ENCODE measurements at regions of chr15 and their contacts with region 1.

Region 1: DNA sequence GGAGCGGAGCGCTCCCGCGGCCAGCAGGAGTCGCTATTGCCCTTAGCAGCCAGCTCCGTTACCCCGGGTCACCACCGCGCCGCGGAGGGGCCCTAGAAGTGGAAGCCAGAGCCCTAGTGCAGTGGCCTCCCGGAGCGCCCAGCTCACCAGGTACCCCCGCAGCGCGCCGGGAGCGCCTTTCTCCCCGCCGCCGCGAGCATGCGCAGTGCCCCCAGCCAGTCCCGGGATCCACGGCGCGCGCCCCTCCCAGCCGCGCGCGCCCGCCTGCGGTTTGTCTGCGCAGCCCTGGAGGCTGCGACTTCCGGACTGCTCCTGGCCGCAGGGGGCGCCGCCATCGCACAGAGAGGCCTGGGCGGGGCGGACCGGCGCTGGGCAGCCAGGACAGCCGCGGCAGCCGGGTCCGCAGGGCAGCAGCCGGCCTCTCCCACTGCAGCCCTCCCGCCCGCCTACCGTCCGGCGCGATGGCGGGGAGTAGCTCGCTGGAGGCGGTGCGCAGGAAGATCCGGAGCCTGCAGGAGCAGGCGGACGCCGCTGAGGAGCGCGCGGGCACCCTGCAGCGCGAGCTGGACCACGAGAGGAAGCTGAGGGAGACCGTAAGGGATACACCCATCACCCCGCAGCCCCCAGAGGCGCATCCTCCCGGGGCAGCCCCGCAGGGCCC is 5.7 kb downstream of the TPM1 start:
- DNase-seq: peak; percentile 72 to 90 (median 85)
- ATAC-seq: peak; percentile 92
- H3K4me3 ChIP-seq: peak overlapping the region; percentile 76
- H3K4me3 Mint-ChIP-seq: peak overlapping the region; percentile 84 to 97 (median 94)
- H3K27ac ChIP-seq: peak overlapping the region; percentile 59
- H3K27ac Mint-ChIP-seq: peak overlapping the region; percentile 25 to 85 (median 68)
- H3K4me1 ChIP-seq: peaks cover 7 to 16% of the 10 kb centered on the region in 2 donors
- H3K4me1 Mint-ChIP-seq: peaks cover 13 to 42% (median 26%) of the 10 kb centered on the region in 7 donors
- H3K27me3 ChIP-seq: peaks cover 17 to 27% of the 10 kb centered on the region in 2 donors
- H3K27me3 Mint-ChIP-seq: peaks cover 30 to 60% (median 36%) of the 10 kb centered on the region in 5 donors

Region 2: DNA sequence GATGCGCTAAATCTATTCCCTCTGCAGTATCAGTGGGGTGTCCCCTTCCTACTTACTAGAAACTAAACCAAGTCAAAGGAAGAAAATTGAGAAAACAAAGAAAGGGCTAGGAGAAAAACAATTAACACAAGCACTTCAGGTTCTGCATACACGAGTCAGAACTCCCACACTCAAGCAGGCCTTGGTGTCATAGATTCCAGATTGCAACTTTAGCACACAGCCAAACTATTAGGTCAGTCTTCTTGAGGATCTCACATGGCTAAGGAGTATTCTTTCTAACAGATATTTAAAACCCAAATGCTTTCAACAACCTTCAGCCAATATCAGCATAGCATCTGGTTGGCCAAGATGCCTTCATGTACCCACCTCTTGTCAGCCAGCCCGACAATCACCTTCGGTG is 1328.0 kb before region 1 on chr15:
- CTCF ChIA-PET with region 1: no interaction called
- POLR2A ChIA-PET with region 1: no interaction called
- intact Hi-C with region 1: no loop called
- DNase-seq: no peak
- ATAC-seq: no peak
- H3K4me3 ChIP-seq: no peak overlapping the region
- H3K4me3 Mint-ChIP-seq: no peak overlapping the region
- H3K27ac ChIP-seq: no peak overlapping the region
- H3K27ac Mint-ChIP-seq: no peak overlapping the region
- H3K4me1 ChIP-seq: no peaks in the 10 kb centered on the region
- H3K4me1 Mint-ChIP-seq: peaks cover 0 to 1% (median 0%) of the 10 kb centered on the region in 7 donors
- H3K27me3 ChIP-seq: no peaks in the 10 kb centered on the region
- H3K27me3 Mint-ChIP-seq: peaks cover 11 to 31% (median 28%) of the 10 kb centered on the region in 5 donors

Region 3: GRCh38 chr15:62799919-62800318 is 248.3 kb before region 1 on chr15:
- CTCF ChIA-PET with region 1: no interaction called
- POLR2A ChIA-PET with region 1: no interaction called
- intact Hi-C with region 1: no loop called
- DNase-seq: no peak
- ATAC-seq: no peak
- H3K4me3 ChIP-seq: no peak overlapping the region
- H3K4me3 Mint-ChIP-seq: no peak overlapping the region
- H3K27ac ChIP-seq: no peak overlapping the region
- H3K27ac Mint-ChIP-seq: no peak overlapping the region
- H3K4me1 ChIP-seq: no peaks in the 10 kb centered on the region
- H3K4me1 Mint-ChIP-seq: peaks cover 0 to 2% (median 0%) of the 10 kb centered on the region in 7 donors
- H3K27me3 ChIP-seq: peaks cover 0 to 3% of the 10 kb centered on the region in 2 donors
- H3K27me3 Mint-ChIP-seq: peaks cover 0 to 11% (median 0%) of the 10 kb centered on the region in 5 donors

Region 4: DNA sequence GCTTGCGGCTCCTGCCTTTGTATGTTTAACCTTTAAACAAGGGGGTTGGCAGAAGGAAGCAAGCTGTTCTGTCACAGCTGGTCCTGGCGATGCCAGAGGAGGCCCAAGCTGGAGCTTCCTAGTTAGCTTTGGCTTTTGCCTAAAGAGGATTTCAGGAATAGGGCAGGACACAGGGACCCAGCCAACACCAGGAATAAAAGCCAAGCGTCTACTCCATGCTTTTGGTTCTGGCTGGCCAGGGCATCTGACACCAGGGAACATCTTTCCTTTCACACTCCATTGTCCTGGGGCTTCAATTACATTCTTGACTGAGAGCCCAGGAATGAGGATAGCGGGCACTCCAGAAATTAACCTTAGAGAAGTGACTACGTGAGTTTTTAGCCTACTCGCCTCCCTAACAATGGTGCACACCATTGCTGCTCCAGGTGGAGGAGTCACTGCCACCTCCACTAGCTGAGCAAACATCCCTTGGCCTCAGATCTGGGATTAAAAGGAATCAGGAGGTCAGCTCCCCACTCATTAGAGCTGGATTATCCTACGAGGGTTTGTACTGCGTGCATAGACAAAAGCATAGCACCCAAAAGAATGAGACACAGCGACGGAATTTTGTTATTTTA is 32.5 kb after region 1 on chr15:
- CTCF ChIA-PET with region 1: no interaction called
- POLR2A ChIA-PET with region 1: no interaction called
- intact Hi-C with region 1: no loop called
- DNase-seq: no peak
- ATAC-seq: no peak
- H3K4me3 ChIP-seq: no peak overlapping the region
- H3K4me3 Mint-ChIP-seq: no peak overlapping the region
- H3K27ac ChIP-seq: no peak overlapping the region
- H3K27ac Mint-ChIP-seq: no peak overlapping the region
- H3K4me1 ChIP-seq: no peaks in the 10 kb centered on the region
- H3K4me1 Mint-ChIP-seq: peaks cover 0 to 8% (median 0%) of the 10 kb centered on the region in 7 donors
- H3K27me3 ChIP-seq: no peaks in the 10 kb centered on the region
- H3K27me3 Mint-ChIP-seq: peaks cover 0 to 11% (median 8%) of the 10 kb centered on the region in 5 donors

Region 5: GRCh38 chr15:63122002-63122893 is 74.0 kb after region 1 on chr15:
- CTCF ChIA-PET with region 1: no interaction called
- POLR2A ChIA-PET with region 1: no interaction called
- intact Hi-C with region 1: loop called (anchors 1 kb)
- DNase-seq: peak; percentile 38 to 91 (median 57)
- ATAC-seq: peak; percentile 95
- H3K4me3 ChIP-seq: peak overlapping the region; percentile 75
- H3K4me3 Mint-ChIP-seq: peak overlapping the region; percentile 80 to 95 (median 92)
- H3K27ac ChIP-seq: peak overlapping the region; percentile 80
- H3K27ac Mint-ChIP-seq: peak overlapping the region; percentile 54 to 95 (median 79)
- H3K4me1 ChIP-seq: peaks cover 4 to 8% of the 10 kb centered on the region in 2 donors
- H3K4me1 Mint-ChIP-seq: peaks cover 9 to 29% (median 18%) of the 10 kb centered on the region in 7 donors
- H3K27me3 ChIP-seq: no peaks in the 10 kb centered on the region
- H3K27me3 Mint-ChIP-seq: no peaks in the 10 kb centered on the region

Region 6: GRCh38 chr15:63135804-63136203 is 87.6 kb after region 1 on chr15:
- CTCF ChIA-PET with region 1: no interaction called
- POLR2A ChIA-PET with region 1: no interaction called
- intact Hi-C with region 1: no loop called
- DNase-seq: no peak
- ATAC-seq: peak; percentile 85
- H3K4me3 ChIP-seq: no peak overlapping the region
- H3K4me3 Mint-ChIP-seq: no peak overlapping the region
- H3K27ac ChIP-seq: no peak overlapping the region
- H3K27ac Mint-ChIP-seq: peak overlapping the region in 1 of 9 donors; percentile 55
- H3K4me1 ChIP-seq: no peaks in the 10 kb centered on the region
- H3K4me1 Mint-ChIP-seq: peaks cover 0 to 11% (median 0%) of the 10 kb centered on the region in 7 donors
- H3K27me3 ChIP-seq: no peaks in the 10 kb centered on the region
- H3K27me3 Mint-ChIP-seq: no peaks in the 10 kb centered on the region

Region 7: GRCh38 chr15:63402498-63403253 is 354.4 kb after region 1 on chr15:
- CTCF ChIA-PET with region 1: interaction called, 15 read pairs
- POLR2A ChIA-PET with region 1: no interaction called
- intact Hi-C with region 1: loop called (anchors 1 kb)
- DNase-seq: peak in 6 of 9 donors; percentile 7 to 60 (median 50)
- ATAC-seq: peak; percentile 67
- H3K4me3 ChIP-seq: no peak overlapping the region
- H3K4me3 Mint-ChIP-seq: no peak overlapping the region
- H3K27ac ChIP-seq: no peak overlapping the region
- H3K27ac Mint-ChIP-seq: no peak overlapping the region
- H3K4me1 ChIP-seq: peaks cover 0 to 3% of the 10 kb centered on the region in 2 donors
- H3K4me1 Mint-ChIP-seq: peaks cover 0 to 19% (median 0%) of the 10 kb centered on the region in 7 donors
- H3K27me3 ChIP-seq: no peaks in the 10 kb centered on the region
- H3K27me3 Mint-ChIP-seq: peaks cover 0 to 6% (median 4%) of the 10 kb centered on the region in 5 donors

Measured in naive thymus-derived CD4-positive, alpha-beta T cell (primary cell).